ENCODE measurements at regions of chrX and their contacts with region 1.

Region 1: GRCh38 chrX:23907498-23908218 is at the starts of genes APOO and CXorf58:
- DNase-seq: peak; percentile 78 to 97 (median 89)
- ATAC-seq: peak; percentile 92
- H3K4me3 ChIP-seq: peak within 1 kb of the TSS; percentile 61
- H3K4me3 Mint-ChIP-seq: peak within 1 kb of the TSS; percentile 92
- H3K27ac ChIP-seq: peak within 1 kb of the TSS; percentile 75 to 84
- H3K27ac Mint-ChIP-seq: peak within 1 kb of the TSS; percentile 96
- H3K4me1 ChIP-seq: peaks cover 13% of the 10 kb centered on the region
- H3K4me1 Mint-ChIP-seq: peaks cover 15% of the 10 kb centered on the region
- H3K27me3 ChIP-seq: no peaks in the 10 kb centered on the region
- H3K27me3 Mint-ChIP-seq: no peaks in the 10 kb centered on the region
- CTCF ChIP-seq: peak; percentile 53
- total RNA-seq, gene APOO: 3.3 to 4.9 TPM
- total RNA-seq, gene CXorf58: not detected

Region 2: GRCh38 chrX:23749576-23749975 is 158.1 kb before region 1 on chrX:
- CTCF ChIA-PET with region 1: no interaction called
- POLR2A ChIA-PET with region 1: no interaction called
- intact Hi-C with region 1: no loop called
- DNase-seq: no peak
- ATAC-seq: no peak
- H3K4me3 ChIP-seq: no peak overlapping the region
- H3K4me3 Mint-ChIP-seq: no peak overlapping the region
- H3K27ac ChIP-seq: no peak overlapping the region
- H3K27ac Mint-ChIP-seq: no peak overlapping the region
- H3K4me1 ChIP-seq: peaks cover 11% of the 10 kb centered on the region
- H3K4me1 Mint-ChIP-seq: peaks cover 13% of the 10 kb centered on the region
- H3K27me3 ChIP-seq: no peaks in the 10 kb centered on the region
- H3K27me3 Mint-ChIP-seq: no peaks in the 10 kb centered on the region
- CTCF ChIP-seq: no peak

Region 3: GRCh38 chrX:23871905-23872546 is 35.6 kb before region 1 on chrX:
- CTCF ChIA-PET with region 1: no interaction called
- POLR2A ChIA-PET with region 1: no interaction called
- intact Hi-C with region 1: no loop called
- DNase-seq: peak in 2 of 14 experiments; percentile 17 to 19
- ATAC-seq: no peak
- H3K4me3 ChIP-seq: no peak overlapping the region
- H3K4me3 Mint-ChIP-seq: no peak overlapping the region
- H3K27ac ChIP-seq: no peak overlapping the region
- H3K27ac Mint-ChIP-seq: no peak overlapping the region
- H3K4me1 ChIP-seq: no peaks in the 10 kb centered on the region
- H3K4me1 Mint-ChIP-seq: no peaks in the 10 kb centered on the region
- H3K27me3 ChIP-seq: no peaks in the 10 kb centered on the region
- H3K27me3 Mint-ChIP-seq: no peaks in the 10 kb centered on the region
- CTCF ChIP-seq: no peak

Region 4: GRCh38 chrX:23930894-23931689 is 23.4 kb after region 1 on chrX:
- CTCF ChIA-PET with region 1: interaction called, 4 read pairs
- POLR2A ChIA-PET with region 1: no interaction called
- intact Hi-C with region 1: loop called in 1 of 2 experiments (anchors 1 kb)
- DNase-seq: peak in 3 of 14 experiments; percentile 38 to 73 (median 46)
- ATAC-seq: peak; percentile 96
- H3K4me3 ChIP-seq: no peak overlapping the region
- H3K4me3 Mint-ChIP-seq: no peak overlapping the region
- H3K27ac ChIP-seq: no peak overlapping the region
- H3K27ac Mint-ChIP-seq: peak overlapping the region; percentile 82
- H3K4me1 ChIP-seq: peaks cover 6% of the 10 kb centered on the region
- H3K4me1 Mint-ChIP-seq: peaks cover 17% of the 10 kb centered on the region
- H3K27me3 ChIP-seq: no peaks in the 10 kb centered on the region
- H3K27me3 Mint-ChIP-seq: no peaks in the 10 kb centered on the region
- CTCF ChIP-seq: no peak

Region 5: GRCh38 chrX:23945206-23945605 is 37.5 kb after region 1 on chrX:
- CTCF ChIA-PET with region 1: interaction called, 3 read pairs
- POLR2A ChIA-PET with region 1: no interaction called
- intact Hi-C with region 1: loop called in 1 of 2 experiments (anchors 5 kb)
- DNase-seq: no peak
- ATAC-seq: no peak
- H3K4me3 ChIP-seq: no peak overlapping the region
- H3K4me3 Mint-ChIP-seq: no peak overlapping the region
- H3K27ac ChIP-seq: no peak overlapping the region
- H3K27ac Mint-ChIP-seq: no peak overlapping the region
- H3K4me1 ChIP-seq: no peaks in the 10 kb centered on the region
- H3K4me1 Mint-ChIP-seq: no peaks in the 10 kb centered on the region
- H3K27me3 ChIP-seq: no peaks in the 10 kb centered on the region
- H3K27me3 Mint-ChIP-seq: no peaks in the 10 kb centered on the region
- CTCF ChIP-seq: no peak

Region 6: DNA sequence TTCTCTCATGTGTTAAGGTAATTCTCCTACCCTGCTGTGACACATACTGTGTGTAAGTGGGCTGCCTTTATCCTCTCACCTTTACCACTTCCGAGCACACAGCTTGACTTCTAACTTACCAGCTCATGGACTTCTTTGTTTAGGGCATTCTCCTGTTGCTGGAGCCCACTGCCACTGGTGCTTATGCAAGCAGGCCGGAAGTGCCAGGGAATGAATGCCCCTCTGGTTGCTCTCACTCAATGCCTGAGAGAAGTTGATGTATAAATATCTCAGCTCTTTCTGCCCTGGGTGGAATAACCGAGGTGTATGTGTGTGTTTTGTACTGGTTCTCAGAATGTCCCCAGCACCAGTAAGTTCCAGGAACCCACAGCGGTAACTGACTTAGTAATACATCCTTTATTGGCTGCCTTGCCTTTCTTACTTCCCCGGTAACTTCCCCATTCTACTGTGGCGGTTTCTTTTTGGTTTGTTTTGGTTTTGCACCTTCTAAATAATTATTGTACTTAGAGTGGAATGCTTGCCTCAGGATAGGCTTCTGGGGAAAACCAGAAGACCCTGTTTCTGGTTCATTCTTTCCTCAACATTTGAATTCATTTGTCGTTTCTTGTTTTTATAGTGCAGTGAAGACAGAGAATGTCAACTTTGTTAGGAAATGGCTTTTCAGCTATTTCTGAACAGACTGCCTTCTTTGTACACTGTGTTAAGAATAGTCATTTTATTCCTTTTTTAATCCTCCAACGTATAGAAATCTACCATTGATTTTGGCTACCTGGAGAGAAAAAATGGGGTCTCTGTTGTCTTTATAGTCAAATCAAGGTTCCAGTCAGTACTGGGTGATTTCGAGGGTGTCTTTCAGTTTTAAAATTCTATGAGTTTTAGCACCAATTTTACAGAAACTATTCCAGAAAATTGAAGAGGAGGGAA is 45.6 kb after region 1 on chrX:
- CTCF ChIA-PET with region 1: interaction called, 3 read pairs
- POLR2A ChIA-PET with region 1: interaction called, 4 read pairs
- intact Hi-C with region 1: loop called (anchors 1 to 5 kb)
- DNase-seq: peak; percentile 0 to 75 (median 24)
- ATAC-seq: peak; percentile 82
- H3K4me3 ChIP-seq: peak overlapping the region; percentile 55
- H3K4me3 Mint-ChIP-seq: peak overlapping the region; percentile 89
- H3K27ac ChIP-seq: peak overlapping the region; percentile 60 to 64
- H3K27ac Mint-ChIP-seq: peak overlapping the region; percentile 89
- H3K4me1 ChIP-seq: peaks cover 8% of the 10 kb centered on the region
- H3K4me1 Mint-ChIP-seq: peaks cover 11% of the 10 kb centered on the region
- H3K27me3 ChIP-seq: no peaks in the 10 kb centered on the region
- H3K27me3 Mint-ChIP-seq: no peaks in the 10 kb centered on the region
- CTCF ChIP-seq: no peak

Region 7: GRCh38 chrX:24024819-24025740 is 117.4 kb after region 1 on chrX:
- CTCF ChIA-PET with region 1: interaction called, 15 read pairs
- POLR2A ChIA-PET with region 1: interaction called, 40 read pairs
- intact Hi-C with region 1: loop called (anchors 2 kb)
- DNase-seq: peak; percentile 63 to 90 (median 76)
- ATAC-seq: peak; percentile 85
- H3K4me3 ChIP-seq: peak overlapping the region; percentile 76
- H3K4me3 Mint-ChIP-seq: peak overlapping the region; percentile 94
- H3K27ac ChIP-seq: peak overlapping the region in 1 of 2 donors; percentile 74
- H3K27ac Mint-ChIP-seq: peak overlapping the region; percentile 94
- H3K4me1 ChIP-seq: peaks cover 7% of the 10 kb centered on the region
- H3K4me1 Mint-ChIP-seq: peaks cover 30% of the 10 kb centered on the region
- H3K27me3 ChIP-seq: no peaks in the 10 kb centered on the region
- H3K27me3 Mint-ChIP-seq: no peaks in the 10 kb centered on the region
- CTCF ChIP-seq: no peak

Region 8: DNA sequence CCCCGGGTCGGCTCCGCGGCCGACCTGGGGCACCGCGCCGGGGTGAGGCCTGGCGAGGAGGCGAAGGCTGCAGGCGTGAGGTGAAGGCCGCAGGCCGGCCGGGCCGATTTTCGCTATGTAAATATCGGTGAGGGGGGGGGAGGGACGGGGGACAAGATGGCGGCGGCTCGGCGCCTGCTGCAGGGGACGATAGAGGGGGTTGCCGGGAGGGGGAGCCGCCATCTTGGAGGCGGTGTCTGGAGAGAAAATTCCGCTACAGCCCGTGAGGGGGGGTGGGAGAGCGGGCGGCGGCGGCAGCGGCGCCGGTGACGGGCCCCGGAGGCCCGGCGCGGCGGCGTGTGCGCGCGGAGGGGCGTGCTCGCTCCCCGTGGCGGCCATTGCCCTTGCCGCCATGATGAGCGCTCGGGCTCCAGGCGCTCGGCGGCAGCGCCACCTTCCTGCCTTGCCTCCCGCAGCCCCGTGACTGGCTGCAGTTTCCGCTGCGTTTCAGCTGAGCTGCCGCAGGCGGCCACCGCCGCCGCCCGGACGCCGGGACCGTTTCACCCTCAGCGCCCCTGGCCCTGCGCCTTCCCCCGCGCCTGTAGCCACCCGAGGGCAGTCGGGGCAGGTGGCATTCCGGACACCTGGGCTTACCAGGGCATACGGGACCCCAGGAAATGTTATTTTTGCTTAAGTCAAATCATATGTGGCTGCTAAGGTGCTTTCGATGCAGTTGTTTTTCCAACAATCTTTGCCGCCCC is 242.6 kb after region 1 on chrX:
- CTCF ChIA-PET with region 1: no interaction called
- POLR2A ChIA-PET with region 1: interaction called, 6 read pairs
- intact Hi-C with region 1: loop called (anchors 1 to 10 kb)
- DNase-seq: peak; percentile 64 to 94 (median 83)
- ATAC-seq: peak; percentile 74
- H3K4me3 ChIP-seq: peak overlapping the region; percentile 74
- H3K4me3 Mint-ChIP-seq: peak overlapping the region; percentile 94
- H3K27ac ChIP-seq: peak overlapping the region; percentile 79 to 80
- H3K27ac Mint-ChIP-seq: peak overlapping the region; percentile 90
- H3K4me1 ChIP-seq: peaks cover 33% of the 10 kb centered on the region
- H3K4me1 Mint-ChIP-seq: peaks cover 73% of the 10 kb centered on the region
- H3K27me3 ChIP-seq: no peaks in the 10 kb centered on the region
- H3K27me3 Mint-ChIP-seq: no peaks in the 10 kb centered on the region
- CTCF ChIP-seq: peak; percentile 43

Region 9: DNA sequence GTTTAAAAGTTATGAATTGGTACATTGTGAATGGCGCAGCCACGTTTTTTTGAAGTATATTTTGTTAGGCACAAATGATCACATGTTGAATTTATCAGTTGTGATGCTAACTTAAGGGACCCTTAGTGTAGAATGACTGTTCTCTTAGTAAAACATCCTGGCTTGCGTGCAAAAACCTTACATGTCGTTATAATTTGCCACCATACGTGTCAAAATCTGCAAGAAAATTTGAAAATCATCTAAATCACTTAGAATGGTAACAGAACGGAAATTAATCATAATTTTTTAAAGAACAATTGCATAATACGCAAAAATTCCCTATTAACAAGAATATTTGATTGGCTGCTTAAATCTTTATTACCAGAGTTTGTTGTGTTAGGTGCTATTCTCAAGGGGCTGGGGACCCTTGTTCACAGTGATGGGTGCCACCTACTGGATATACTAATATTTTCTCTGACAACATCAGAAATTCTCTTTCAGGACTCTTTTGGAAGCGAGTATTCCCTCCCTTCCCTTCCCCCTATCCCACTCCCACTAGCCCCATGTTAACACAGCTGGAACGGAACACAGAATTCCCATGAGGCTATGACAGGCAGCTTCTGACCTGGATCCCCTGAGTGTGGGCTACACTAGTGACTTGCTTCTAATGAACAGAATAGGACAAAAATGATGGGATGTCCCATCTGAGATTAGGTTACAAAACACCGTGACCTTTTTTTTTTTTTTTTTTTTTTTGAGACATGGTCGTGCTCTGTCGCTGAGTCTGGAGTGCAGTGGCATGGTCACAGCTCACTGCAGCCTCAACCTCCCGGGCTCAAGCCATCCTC is 334.4 kb after region 1 on chrX:
- CTCF ChIA-PET with region 1: no interaction called
- POLR2A ChIA-PET with region 1: no interaction called
- intact Hi-C with region 1: loop called in 1 of 2 experiments (anchors 5 kb)
- DNase-seq: peak in 4 of 14 experiments; percentile 22 to 49 (median 44)
- ATAC-seq: peak; percentile 48
- H3K4me3 ChIP-seq: no peak overlapping the region
- H3K4me3 Mint-ChIP-seq: no peak overlapping the region
- H3K27ac ChIP-seq: no peak overlapping the region
- H3K27ac Mint-ChIP-seq: no peak overlapping the region
- H3K4me1 ChIP-seq: no peaks in the 10 kb centered on the region
- H3K4me1 Mint-ChIP-seq: no peaks in the 10 kb centered on the region
- H3K27me3 ChIP-seq: no peaks in the 10 kb centered on the region
- H3K27me3 Mint-ChIP-seq: no peaks in the 10 kb centered on the region
- CTCF ChIP-seq: peak; percentile 36